SK-N-SH (cell line): ENCODE measurements at regions of chr2 and their contacts with region 1.

Region 1: GRCh38 chr2:41896186-41896846 is 151.5 kb upstream of the PKDCC start:
- DNase-seq: no peak
- H3K4me3 ChIP-seq: no peak overlapping the region
- H3K27ac ChIP-seq: peak overlapping the region in 1 of 2 experiments; percentile 69; a peak in 2 of 4 replicates
- H3K4me1 ChIP-seq: peaks cover 0 to 23% of the 10 kb centered on the region in 2 experiments; a peak in 2 of 4 replicates
- H3K27me3 ChIP-seq: peaks cover 39% of the 10 kb centered on the region; the same call in 1 of the 2 replicates
- CTCF ChIP-seq: no peak
- EP300 ChIP-seq: peak in 1 of 2 experiments; percentile 80; a peak in 2 of 4 replicates
- RAD21 ChIP-seq: no peak

Region 2: DNA sequence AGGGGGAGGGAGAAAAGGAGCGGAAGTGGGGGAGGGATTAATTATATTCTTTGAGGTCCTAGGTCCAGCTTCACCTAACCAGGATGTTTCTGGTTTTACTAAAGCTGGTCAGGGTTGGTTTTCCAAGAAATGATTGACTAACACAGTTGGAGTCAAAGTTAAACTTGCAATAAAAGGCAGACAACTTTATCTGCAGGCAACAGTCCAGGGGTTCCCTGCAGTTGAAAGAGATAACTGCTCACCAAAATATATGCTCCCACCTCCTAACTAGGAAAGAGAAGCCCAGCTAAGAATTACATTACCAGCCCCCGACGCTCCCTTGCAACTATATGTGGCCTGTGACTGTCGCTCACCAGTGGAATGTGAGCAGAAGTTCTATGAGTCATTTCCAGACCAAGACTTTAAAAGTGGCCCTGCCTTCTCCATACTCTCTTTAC is 11.5 kb after region 1 on chr2:
- CTCF ChIA-PET with region 1: interaction called, 10 read pairs
- POLR2A ChIA-PET with region 1: no interaction called
- DNase-seq: no peak
- H3K4me3 ChIP-seq: no peak overlapping the region
- H3K27ac ChIP-seq: no peak overlapping the region
- H3K4me1 ChIP-seq: peaks cover 3 to 10% of the 10 kb centered on the region in 2 experiments; a peak in 1 of 4 replicates
- H3K27me3 ChIP-seq: no peaks in the 10 kb centered on the region; the same call in 1 of the 2 replicates
- CTCF ChIP-seq: no peak
- EP300 ChIP-seq: no peak
- RAD21 ChIP-seq: no peak